Activated T-helper 1 cell treated with anti-CD3 and anti-CD28 coated beads, Interleukin-12 subunit alpha, Interleukin-12 subunit beta, Interleukin-2, Interleukin-4 antibody, amounts not matched to agents 30 ng/mL and 10 ng/mL and 1 ng/mL, durations not matched to agents 14 hours and 24 hours and 36 hours (primary cell): ENCODE measurements at regions of chr20 and their contacts with region 1.

Region 1: DNA sequence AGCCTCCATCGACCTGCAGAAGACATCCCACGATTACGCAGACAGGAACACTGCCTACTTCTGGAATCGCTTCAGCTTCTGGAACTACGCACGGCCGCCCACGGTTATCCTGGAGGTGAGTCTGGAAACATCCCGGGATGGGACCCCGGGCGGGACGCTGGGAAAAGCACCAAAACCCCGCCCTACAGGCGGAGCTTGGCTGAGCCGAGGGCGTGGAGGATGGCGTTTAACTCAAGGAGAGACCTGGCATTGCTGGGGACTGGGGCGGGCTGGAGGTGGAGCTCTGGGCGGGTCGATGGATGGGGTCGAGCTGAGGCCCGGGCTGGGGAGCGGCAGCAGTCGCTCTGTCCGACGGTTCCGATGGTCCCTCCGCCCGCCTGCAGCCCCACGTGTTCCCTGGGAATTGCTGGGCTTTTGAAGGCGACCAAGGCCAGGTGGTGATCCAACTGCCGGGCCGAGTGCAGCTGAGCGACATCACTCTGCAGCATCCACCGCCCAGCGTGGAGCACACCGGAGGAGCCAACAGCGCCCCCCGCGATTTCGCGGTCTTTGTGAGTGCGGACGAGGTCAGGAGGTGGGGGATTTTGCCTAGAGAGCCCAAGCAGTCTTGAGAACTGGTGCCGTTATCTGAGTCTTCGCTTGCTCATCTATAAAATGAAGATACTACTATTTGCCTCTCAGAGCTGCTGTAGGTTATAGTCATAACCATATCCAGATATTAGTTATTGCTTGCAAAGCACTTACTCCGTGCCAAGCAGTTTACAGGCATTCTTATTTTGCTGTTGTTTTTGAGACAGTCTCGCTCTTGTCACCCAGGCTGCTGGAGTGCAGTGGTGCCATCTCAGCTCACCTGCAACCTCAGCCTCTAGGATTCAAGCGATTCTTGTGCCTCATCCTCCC is 3.8 kb downstream of the SPAG4 start:
- DNase-seq: peak; percentile 75
- H3K4me3 Mint-ChIP-seq: peak overlapping the region; percentile 88
- H3K27ac Mint-ChIP-seq: peak overlapping the region; percentile 89
- H3K4me1 Mint-ChIP-seq: peaks cover 27% of the 10 kb centered on the region
- H3K27me3 Mint-ChIP-seq: no peaks in the 10 kb centered on the region

Region 2: DNA sequence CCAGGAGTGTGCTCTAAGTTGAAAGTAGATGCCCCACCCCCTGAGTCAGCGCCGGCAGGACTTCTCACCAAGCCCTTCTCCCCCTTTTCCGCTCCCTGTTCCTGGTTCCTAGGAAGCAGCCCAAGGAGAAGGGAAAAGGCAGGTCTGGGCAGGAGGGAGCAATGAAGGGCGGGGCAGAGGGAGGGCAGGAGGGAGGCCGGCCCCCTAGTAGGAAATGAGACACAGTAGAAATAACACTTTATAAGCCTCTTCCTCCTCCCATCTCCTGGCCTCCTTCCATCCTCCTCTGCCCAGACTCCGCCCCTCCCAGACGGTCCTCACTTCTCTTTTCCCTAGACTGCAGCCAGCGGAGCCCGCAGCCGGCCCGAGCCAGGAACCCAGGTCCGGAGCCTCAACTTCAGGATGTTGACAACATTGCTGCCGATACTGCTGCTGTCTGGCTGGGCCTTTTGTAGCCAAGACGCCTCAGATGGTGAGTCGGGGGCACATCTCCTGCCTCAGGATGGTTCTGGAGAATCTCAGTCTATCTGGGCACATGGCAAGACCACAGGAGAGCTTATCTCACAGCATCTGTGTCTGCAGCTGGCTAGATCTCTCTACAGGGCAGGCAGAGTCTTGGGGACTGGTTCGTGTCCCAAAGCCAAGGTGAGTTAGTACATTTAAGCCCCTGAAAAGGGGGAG is 447.6 kb before region 1 on chr20 and contains the start of gene PROCR:
- intact Hi-C with region 1: no loop called
- DNase-seq: no peak
- H3K4me3 Mint-ChIP-seq: peak within 1 kb of the TSS; percentile 56
- H3K27ac Mint-ChIP-seq: peak within 1 kb of the TSS; percentile 40
- H3K4me1 Mint-ChIP-seq: peaks cover 12% of the 10 kb centered on the region
- H3K27me3 Mint-ChIP-seq: no peaks in the 10 kb centered on the region
- total RNA-seq, gene PROCR: 0.75 and 0.78 TPM in 2 replicates

Region 3: DNA sequence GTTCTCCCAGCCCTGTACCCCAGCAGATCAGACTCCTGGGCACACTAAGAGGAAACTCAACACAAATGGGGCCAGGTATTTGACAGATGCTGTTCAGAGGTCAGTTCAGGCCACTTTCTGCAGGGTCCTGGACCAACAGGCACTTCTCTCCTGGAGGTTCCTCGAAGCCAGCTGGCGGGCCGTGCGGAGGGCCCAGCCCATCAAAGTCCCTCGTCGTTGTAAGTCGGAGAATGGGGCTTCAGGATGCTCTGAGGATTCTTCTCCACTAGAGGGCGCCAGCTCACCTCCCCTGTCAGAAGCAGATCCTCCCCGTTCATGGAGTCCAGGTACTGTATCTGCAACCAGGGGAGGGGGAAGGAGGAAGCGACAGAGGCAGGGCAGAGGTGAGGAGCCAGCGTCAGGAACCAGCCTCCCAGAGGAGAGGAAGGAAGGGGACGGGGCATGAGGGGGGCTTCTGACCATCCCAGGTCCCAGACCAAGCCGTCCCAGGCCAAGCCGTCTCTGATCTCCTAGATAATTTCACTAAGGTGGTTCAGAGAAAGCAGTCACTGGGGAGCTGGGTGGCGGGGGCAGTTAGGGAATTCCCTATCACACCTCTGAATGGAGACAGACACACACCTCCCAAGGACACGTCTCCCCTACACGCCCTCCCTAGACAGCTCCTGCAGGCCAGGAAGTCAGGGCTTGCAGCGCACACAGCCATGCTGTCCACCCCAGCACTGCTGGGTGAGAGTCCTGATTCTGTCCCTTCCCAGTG is 315.5 kb before region 1 on chr20:
- intact Hi-C with region 1: loop called (anchors 1 kb)
- DNase-seq: peak; percentile 81
- H3K4me3 Mint-ChIP-seq: no peak overlapping the region
- H3K27ac Mint-ChIP-seq: peak overlapping the region; percentile 71
- H3K4me1 Mint-ChIP-seq: peaks cover 32% of the 10 kb centered on the region
- H3K27me3 Mint-ChIP-seq: no peaks in the 10 kb centered on the region

Region 4: DNA sequence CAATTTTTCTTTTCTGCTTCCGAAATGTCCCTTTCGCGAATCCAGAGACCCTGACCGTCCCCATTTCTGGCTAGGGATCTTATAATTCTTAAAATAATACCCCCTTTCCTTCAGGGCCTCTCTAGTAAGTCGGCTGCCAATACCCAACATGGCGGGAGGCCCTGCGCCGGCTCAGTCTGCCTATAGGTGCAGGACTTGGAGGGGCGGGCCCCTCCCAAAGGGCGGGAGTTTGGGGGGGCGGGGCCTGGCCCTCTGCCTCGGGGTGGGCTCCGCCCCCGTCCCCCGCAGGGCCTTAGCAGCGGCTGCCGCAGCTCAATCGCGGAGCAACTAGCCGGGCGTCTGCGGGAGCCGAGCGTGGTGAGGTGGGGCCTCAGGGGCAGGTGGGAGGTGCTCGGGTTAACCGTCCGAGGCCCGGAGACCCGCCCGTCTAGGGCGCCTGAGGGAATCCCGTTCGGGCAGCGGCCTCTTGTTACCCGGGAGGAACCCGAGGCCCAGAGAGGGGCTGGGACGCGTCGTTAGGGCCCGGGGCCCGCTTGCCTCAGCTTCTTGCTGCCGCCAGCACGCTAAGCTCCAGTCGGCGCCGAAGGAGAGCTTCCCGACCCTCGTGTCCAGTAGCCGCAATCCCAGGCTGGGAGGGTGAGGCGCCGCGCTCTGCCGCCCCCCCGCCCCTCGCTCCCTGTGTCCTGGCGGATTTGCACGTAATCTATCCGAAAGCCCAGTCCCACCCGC is 164.4 kb before region 1 on chr20 and contains the start of gene CEP250:
- intact Hi-C with region 1: loop called (anchors 1 kb)
- DNase-seq: peak; percentile 88
- H3K4me3 Mint-ChIP-seq: peak within 1 kb of the TSS; percentile 93
- H3K27ac Mint-ChIP-seq: peak within 1 kb of the TSS; percentile 99
- H3K4me1 Mint-ChIP-seq: peaks cover 22% of the 10 kb centered on the region
- H3K27me3 Mint-ChIP-seq: no peaks in the 10 kb centered on the region
- total RNA-seq, gene CEP250: 44.4 and 45.6 TPM in 2 replicates

Region 5: GRCh38 chr20:35583636-35584560 is 35.5 kb before region 1 on chr20:
- intact Hi-C with region 1: no loop called
- DNase-seq: no peak
- H3K4me3 Mint-ChIP-seq: no peak overlapping the region
- H3K27ac Mint-ChIP-seq: no peak overlapping the region
- H3K4me1 Mint-ChIP-seq: no peaks in the 10 kb centered on the region
- H3K27me3 Mint-ChIP-seq: peaks cover 3% of the 10 kb centered on the region

Region 6: GRCh38 chr20:35664544-35665221 is 45.2 kb after region 1 on chr20 and contains the starts of genes CPNE1 and RBM12:
- intact Hi-C with region 1: loop called (anchors 1 kb)
- DNase-seq: peak; percentile 91
- H3K4me3 Mint-ChIP-seq: peak within 1 kb of the TSS; percentile 95
- H3K27ac Mint-ChIP-seq: peak within 1 kb of the TSS; percentile 99
- H3K4me1 Mint-ChIP-seq: peaks cover 48% of the 10 kb centered on the region
- H3K27me3 Mint-ChIP-seq: no peaks in the 10 kb centered on the region
- total RNA-seq, gene CPNE1: 304 and 308 TPM in 2 replicates
- total RNA-seq, gene RBM12: 151 and 168 TPM in 2 replicates

Region 7: GRCh38 chr20:35741892-35742740 is 122.7 kb after region 1 on chr20 and contains the start of gene RBM39:
- intact Hi-C with region 1: loop called (anchors 1 kb)
- DNase-seq: peak; percentile 100
- H3K4me3 Mint-ChIP-seq: peak within 1 kb of the TSS; percentile 98
- H3K27ac Mint-ChIP-seq: peak within 1 kb of the TSS; percentile 99
- H3K4me1 Mint-ChIP-seq: peaks cover 40% of the 10 kb centered on the region
- H3K27me3 Mint-ChIP-seq: no peaks in the 10 kb centered on the region
- total RNA-seq, gene RBM39: 349 and 357 TPM in 2 replicates